ENCODE measurements at regions of chr3 and their contacts with region 1.

Region 1: DNA sequence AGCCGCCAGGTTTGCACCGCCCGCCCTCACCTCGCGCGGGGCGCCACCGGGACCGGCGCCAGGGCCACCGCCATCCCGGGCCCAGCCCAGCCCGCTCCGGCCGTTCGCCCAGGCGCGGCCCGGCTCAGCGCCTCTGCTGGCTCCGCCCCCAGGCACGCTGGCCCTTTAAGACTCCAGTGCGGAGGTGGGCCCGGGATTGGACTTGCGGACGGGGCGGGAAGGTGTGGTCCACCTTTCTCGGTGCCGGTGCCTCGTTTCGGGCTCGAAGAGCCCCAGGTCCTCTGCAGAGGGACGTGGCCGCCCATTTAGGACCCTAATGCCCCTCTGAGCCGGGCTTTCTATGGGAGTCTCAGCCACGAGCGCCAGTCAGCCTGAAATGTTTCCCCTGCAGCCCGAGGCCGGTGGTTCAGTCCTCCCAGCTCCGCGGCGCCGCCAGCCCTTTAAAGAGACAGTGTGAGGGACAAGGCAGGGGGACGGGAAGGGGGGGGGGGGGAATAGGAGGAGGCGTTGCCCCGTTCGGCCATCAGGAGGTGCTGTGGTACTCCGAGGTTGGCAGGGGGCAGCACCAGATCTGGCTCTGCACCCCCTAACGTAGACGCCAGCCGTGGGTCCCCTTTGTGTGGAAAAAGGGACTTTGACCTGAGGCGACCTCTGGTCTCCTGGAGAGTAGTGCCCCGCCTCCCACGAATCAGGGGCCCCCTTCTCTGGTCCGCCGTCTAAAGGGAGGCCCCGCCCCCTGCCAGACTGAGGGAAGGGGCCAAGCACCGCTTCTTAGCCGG is 1.0 kb downstream of the HYAL2 start:
- DNase-seq: peak; percentile 69 to 89
- H3K4me3 ChIP-seq: peak overlapping the region; percentile 69
- H3K27ac ChIP-seq: peak overlapping the region; percentile 83
- H3K4me1 ChIP-seq: peaks cover 31% of the 10 kb centered on the region
- H3K27me3 ChIP-seq: no peaks in the 10 kb centered on the region
- CTCF ChIP-seq: peak; percentile 62

Region 2: GRCh38 chr3:50078622-50079021 is 242.9 kb before region 1 on chr3:
- CTCF ChIA-PET with region 1: no interaction called
- POLR2A ChIA-PET with region 1: no interaction called
- intact Hi-C with region 1: no loop called
- DNase-seq: no peak
- H3K4me3 ChIP-seq: no peak overlapping the region
- H3K27ac ChIP-seq: no peak overlapping the region
- H3K4me1 ChIP-seq: no peaks in the 10 kb centered on the region
- H3K27me3 ChIP-seq: no peaks in the 10 kb centered on the region
- CTCF ChIP-seq: no peak

Region 3: DNA sequence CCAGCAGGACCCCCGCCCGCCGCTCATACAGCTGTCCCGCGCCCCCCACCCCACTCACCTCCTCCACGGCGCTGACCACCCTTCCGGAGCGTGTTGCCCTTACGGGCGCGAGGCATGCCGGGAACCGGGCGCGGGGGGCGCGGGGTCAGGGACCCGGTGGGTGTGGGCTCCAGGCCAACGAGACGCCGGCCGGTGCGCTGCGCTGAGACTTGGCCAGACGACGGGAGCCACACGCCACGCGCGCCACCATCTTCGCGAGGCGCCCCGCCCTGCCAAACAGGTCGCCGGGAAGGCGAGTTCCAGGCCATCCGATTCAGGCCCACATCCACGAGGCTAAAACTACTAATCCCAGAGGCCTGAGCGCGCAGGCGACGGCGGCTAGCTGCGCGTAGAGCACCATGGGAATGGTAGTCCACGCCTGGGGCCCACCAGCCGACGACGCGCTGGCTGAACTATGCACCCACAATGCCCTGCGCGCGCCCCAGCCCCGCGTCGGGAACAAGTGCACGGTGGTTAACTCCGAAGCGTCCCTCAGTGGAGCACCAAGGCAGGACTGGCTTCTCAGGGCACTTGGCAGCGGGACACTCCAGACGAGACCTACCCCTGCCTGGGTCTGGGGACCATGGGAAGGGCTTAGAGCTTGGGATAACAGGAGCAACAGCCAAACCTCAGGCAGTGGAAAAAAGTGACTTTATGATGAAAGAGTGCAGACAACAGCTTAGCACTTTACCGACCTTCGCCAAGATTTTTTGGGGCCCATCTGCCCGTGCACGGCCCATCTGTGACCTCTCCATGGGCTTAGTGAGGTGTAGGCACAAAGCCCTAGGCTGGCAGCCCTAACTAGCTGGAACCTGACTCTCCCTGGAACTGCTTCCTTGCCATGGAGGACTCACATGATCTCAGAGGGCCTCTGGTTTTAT is 29.1 kb before region 1 on chr3 and contains the start of gene IFRD2:
- CTCF ChIA-PET with region 1: interaction called, 10 read pairs
- POLR2A ChIA-PET with region 1: interaction called, 7 read pairs
- intact Hi-C with region 1: loop called (anchors 1 kb)
- DNase-seq: peak; percentile 90 to 95
- H3K4me3 ChIP-seq: peak within 1 kb of the TSS; percentile 79
- H3K27ac ChIP-seq: peak within 1 kb of the TSS; percentile 74
- H3K4me1 ChIP-seq: peaks cover 13% of the 10 kb centered on the region
- H3K27me3 ChIP-seq: no peaks in the 10 kb centered on the region
- CTCF ChIP-seq: no peak
- total RNA-seq, gene IFRD2: 93.1 and 118 TPM in 2 replicates

Region 4: GRCh38 chr3:50600841-50601591 is 279.5 kb after region 1 on chr3:
- CTCF ChIA-PET with region 1: no interaction called
- POLR2A ChIA-PET with region 1: no interaction called
- intact Hi-C with region 1: no loop called
- DNase-seq: peak; percentile 76 to 81
- H3K4me3 ChIP-seq: no peak overlapping the region
- H3K27ac ChIP-seq: peak overlapping the region; percentile 39; the same call in 1 of the 2 replicates
- H3K4me1 ChIP-seq: peaks cover 38% of the 10 kb centered on the region
- H3K27me3 ChIP-seq: no peaks in the 10 kb centered on the region
- CTCF ChIP-seq: no peak